Activated CD4-positive, alpha-beta memory T cell treated with anti-CD3 and anti-CD28 coated beads for 36 hours (primary cell): ENCODE measurements at regions of chr9 and their contacts with region 1.

Region 1: DNA sequence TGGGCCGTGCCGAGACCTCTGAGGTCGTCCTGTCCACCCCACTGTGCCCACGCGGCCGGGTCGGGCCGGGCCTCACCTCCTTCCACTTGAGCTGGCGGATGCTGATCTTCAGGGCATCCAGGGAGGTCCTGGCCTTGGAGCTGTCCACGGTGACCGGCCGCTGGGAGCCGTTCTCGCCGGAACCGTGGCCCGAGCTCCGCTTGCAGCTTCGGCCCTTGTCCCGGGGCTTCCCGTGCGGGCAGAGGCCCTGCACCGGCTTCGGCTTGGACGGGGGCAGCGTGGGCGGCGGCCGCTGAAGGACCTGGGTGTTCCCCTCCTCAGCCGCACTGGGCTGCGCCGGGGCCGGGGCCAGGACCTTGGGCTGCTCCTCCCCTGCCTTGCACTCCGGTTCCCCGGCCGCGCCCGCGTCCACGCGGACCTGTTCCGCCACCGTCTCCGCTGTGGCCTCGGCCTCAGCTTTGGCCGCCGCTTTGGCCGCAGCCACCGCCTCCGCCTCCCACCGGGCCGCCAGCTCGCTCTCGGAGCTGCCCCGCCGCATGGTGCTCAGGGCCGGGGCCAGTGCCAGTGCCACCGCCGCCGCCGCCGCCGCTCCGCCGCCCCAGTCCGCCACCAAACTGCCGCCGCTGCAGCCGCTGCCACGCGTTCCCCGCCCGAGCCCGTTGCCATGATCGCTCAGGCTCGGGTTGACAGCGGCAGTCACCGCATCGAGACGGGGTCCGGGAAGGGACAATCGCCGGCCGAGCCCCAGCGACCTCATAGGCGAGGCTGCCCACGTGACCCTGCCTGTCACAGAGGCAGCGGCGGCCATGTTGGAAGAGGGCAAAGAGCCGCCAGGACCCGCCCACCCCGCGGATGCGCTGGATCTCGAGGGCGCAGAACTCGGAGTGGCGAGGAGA is at the start of gene TTLL11:
- DNase-seq: peak; percentile 97
- H3K4me3 Mint-ChIP-seq: peak within 1 kb of the TSS; percentile 79
- H3K27ac Mint-ChIP-seq: no peak within 1 kb of the TSS
- H3K4me1 Mint-ChIP-seq: peaks cover 33% of the 10 kb centered on the region
- H3K27me3 Mint-ChIP-seq: peaks cover 5% of the 10 kb centered on the region
- total RNA-seq, gene TTLL11: 0.97 TPM

Region 2: GRCh38 chr9:120579750-120580590 is 1512.9 kb before region 1 on chr9 and contains the start of gene CDK5RAP2:
- CTCF ChIA-PET with region 1: no interaction called
- POLR2A ChIA-PET with region 1: no interaction called
- intact Hi-C with region 1: loop called (anchors 5 kb)
- DNase-seq: peak; percentile 96
- H3K4me3 Mint-ChIP-seq: peak within 1 kb of the TSS; percentile 97
- H3K27ac Mint-ChIP-seq: peak within 1 kb of the TSS; percentile 85
- H3K4me1 Mint-ChIP-seq: peaks cover 45% of the 10 kb centered on the region
- H3K27me3 Mint-ChIP-seq: no peaks in the 10 kb centered on the region
- total RNA-seq, gene CDK5RAP2: 75.3 to 75.9 TPM

Region 3: GRCh38 chr9:122065923-122066629 is 26.8 kb before region 1 on chr9:
- CTCF ChIA-PET with region 1: no interaction called
- POLR2A ChIA-PET with region 1: no interaction called
- intact Hi-C with region 1: no loop called
- DNase-seq: no peak
- H3K4me3 Mint-ChIP-seq: no peak overlapping the region
- H3K27ac Mint-ChIP-seq: no peak overlapping the region
- H3K4me1 Mint-ChIP-seq: peaks cover 3% of the 10 kb centered on the region
- H3K27me3 Mint-ChIP-seq: no peaks in the 10 kb centered on the region

Region 4: GRCh38 chr9:122159026-122159924 is 66.4 kb after region 1 on chr9 and contains the starts of genes MORN5 and NDUFA8:
- CTCF ChIA-PET with region 1: interaction called, 12 read pairs
- POLR2A ChIA-PET with region 1: no interaction called
- intact Hi-C with region 1: loop called (anchors 1 kb)
- DNase-seq: peak; percentile 96
- H3K4me3 Mint-ChIP-seq: peak within 1 kb of the TSS; percentile 99
- H3K27ac Mint-ChIP-seq: peak within 1 kb of the TSS; percentile 93
- H3K4me1 Mint-ChIP-seq: peaks cover 38% of the 10 kb centered on the region
- H3K27me3 Mint-ChIP-seq: peaks cover 17% of the 10 kb centered on the region
- total RNA-seq, gene MORN5: not detected
- total RNA-seq, gene NDUFA8: 48.3 to 53.3 TPM

Region 5: GRCh38 chr9:122264360-122265148 is 171.7 kb after region 1 on chr9 and contains the starts of genes MRRF and RBM18:
- CTCF ChIA-PET with region 1: no interaction called
- POLR2A ChIA-PET with region 1: interaction called, 11 read pairs
- intact Hi-C with region 1: loop called (anchors 1 kb)
- DNase-seq: peak; percentile 94
- H3K4me3 Mint-ChIP-seq: peak within 1 kb of the TSS; percentile 99
- H3K27ac Mint-ChIP-seq: peak within 1 kb of the TSS; percentile 98
- H3K4me1 Mint-ChIP-seq: peaks cover 46% of the 10 kb centered on the region
- H3K27me3 Mint-ChIP-seq: no peaks in the 10 kb centered on the region
- total RNA-seq, gene MRRF: 47.2 to 52.5 TPM
- total RNA-seq, gene RBM18: 25.1 to 25.9 TPM